ENCODE measurements at regions of chr9 and their contacts with region 1.

Region 1: GRCh38 chr9:130042406-130042832 is 570 bp downstream of the FNBP1 start:
- DNase-seq: no peak
- H3K4me3 ChIP-seq: peak overlapping the region; percentile 86
- H3K27ac ChIP-seq: no peak overlapping the region
- H3K27me3 ChIP-seq: no peaks in the 10 kb centered on the region
- CTCF ChIP-seq: no peak

Region 2: DNA sequence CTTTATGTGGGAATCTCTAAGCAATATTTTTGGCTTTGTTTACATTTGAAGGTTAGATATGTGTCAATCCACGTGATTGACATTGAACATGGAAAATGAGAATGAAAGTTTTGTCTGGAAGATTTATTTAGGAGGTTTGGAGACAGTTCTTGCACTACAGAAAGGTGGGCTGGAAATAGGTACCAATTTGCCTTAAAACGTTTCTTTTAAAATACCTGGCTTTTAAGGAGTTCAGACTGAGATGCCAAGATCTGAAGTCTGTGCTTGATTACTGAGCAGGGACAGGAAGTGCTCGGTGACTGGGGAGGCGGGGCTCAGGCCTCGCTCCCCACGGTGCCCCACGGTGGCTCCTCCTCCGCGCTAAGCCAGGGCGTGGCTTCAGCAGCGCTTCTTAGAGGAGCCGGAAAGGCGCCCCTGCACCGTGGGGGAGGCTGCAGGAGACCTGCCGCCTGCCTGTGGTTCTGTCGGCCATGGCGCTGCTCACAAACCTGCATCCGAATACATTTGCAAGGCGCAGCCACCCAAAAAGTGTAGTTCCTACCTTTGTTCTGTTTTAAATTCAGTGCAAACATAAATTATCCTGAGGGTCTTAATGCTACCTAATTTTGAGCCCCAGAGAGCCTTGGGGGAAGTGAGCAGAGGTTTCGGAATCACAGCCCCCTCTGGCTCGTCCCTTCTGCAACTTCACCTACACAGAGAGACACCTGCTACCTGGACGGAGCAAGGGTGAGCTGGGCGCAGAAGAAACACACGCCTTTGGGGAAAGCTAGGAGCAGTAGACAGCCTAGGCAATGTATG is 158.0 kb before region 1 on chr9:
- CTCF ChIA-PET with region 1: interaction called, 13 read pairs
- POLR2A ChIA-PET with region 1: interaction called, 5 read pairs
- DNase-seq: no peak
- H3K4me3 ChIP-seq: peak overlapping the region; percentile 17; the same call in 1 of the 2 replicates
- H3K27ac ChIP-seq: peak overlapping the region; percentile 21
- H3K27me3 ChIP-seq: no peaks in the 10 kb centered on the region
- CTCF ChIP-seq: no peak

Region 3: DNA sequence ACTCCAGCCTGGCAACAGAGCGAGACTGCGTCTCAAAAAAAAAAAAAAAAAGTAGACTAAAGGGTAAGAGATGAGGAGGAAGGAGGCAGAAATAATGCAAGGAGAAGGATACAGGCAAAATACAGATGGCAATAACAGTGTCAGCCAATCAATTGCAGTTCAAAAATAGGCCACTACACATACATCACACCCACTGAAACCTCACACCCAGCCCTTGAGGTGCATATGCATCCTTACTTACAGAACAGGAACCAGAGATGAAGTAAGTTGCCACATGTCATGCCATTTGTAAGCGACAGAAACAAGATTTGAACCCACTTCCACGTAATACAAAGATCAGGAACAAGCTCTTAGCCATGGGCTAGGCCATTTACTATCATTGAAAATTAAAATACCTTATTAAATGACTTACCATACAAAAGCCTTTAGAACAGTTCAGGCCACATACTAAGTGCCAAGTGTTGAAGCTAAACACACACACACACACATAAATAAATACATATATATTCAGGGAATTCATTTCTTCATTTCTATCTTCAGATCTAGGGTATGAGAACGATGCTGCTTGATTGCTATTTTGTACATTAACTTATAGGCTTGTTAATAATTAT is 97.8 kb before region 1 on chr9:
- CTCF ChIA-PET with region 1: no interaction called
- POLR2A ChIA-PET with region 1: interaction called, 11 read pairs
- DNase-seq: no peak
- H3K4me3 ChIP-seq: no peak overlapping the region
- H3K27ac ChIP-seq: no peak overlapping the region
- H3K27me3 ChIP-seq: no peaks in the 10 kb centered on the region
- CTCF ChIP-seq: no peak

Region 4: GRCh38 chr9:130794923-130795495 is 752.6 kb after region 1 on chr9:
- CTCF ChIA-PET with region 1: no interaction called
- POLR2A ChIA-PET with region 1: no interaction called
- DNase-seq: no peak
- H3K4me3 ChIP-seq: no peak overlapping the region
- H3K27ac ChIP-seq: peak overlapping the region; percentile 55
- H3K27me3 ChIP-seq: no peaks in the 10 kb centered on the region
- CTCF ChIP-seq: no peak